ENCODE measurements at regions of chr12 and their contacts with region 1.

Region 1: DNA sequence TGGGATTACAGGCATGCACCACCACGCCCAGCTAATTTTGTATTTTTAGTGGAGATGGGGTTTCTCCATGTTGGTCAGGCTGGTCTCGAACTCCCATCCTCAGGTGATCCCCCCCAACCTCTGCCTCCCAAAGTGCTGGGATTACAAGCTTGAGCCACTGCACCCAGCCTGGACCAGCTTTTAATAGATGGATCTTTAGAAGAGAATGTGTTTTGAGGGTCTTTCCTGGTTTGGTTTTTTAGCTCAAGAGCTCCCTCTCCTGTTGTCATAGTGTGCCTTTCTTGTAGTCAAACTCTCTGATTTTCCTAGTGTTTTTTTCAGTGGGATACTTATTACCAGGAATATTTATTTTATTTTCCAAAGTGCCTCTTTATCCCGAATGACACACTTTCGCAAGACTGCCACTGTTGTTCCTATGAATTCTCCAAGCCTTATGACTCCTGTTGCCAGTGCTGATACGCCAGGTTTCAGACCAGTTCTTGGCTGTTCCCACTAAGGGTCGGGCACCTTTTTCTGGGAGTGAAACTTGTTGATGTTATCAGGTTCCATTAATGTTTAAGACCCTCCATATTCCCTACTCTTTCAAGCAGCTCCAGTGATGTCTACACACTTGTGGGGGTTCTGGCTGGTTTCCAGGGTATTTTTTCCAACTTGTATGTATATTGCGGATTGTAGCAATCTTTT is 31.5 kb upstream of the LIMA1 start:
- DNase-seq: peak; percentile 50
- H3K4me3 ChIP-seq: no peak overlapping the region
- H3K27ac ChIP-seq: no peak overlapping the region
- H3K4me1 ChIP-seq: no peaks in the 10 kb centered on the region
- CTCF ChIP-seq: peak; percentile 85

Region 2: DNA sequence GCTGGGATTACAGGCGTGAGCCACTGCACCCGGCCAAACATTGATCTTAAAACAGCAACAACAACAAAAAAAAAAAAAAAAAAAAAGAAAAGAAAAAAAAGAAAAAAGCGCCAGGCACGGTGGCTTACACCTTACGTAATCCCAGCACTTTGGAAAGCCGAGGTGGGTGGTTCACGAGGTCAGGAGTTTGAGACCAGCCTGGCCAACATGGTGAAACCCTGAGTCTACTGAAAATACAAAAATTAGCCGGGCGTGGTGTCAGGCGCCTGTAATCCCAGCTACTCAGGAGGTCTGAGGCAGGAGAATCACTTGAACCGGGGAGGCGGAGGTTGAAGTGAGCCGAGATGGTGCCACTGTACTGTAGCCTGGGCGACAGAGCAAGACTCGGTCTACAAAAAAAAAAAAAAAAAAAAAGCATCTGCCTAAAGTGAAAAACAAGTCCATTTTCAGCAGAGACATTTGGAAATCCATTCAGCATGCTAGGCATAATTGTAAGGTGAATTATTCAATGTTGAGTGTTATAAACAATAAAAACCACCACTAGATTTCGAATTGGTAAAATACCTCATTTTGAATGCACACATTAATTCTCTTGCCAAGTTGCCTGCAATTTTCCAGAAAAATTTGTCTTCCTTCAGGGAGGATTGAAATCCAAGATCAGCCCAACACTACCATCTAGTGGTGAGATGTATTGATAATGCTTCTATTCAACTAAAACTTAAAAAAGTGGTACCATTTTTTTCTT is 139.6 kb before region 1 on chr12:
- CTCF ChIA-PET with region 1: no interaction called
- POLR2A ChIA-PET with region 1: no interaction called
- intact Hi-C with region 1: loop called (anchors 1 kb)
- DNase-seq: peak; percentile 69
- H3K4me3 ChIP-seq: no peak overlapping the region
- H3K27ac ChIP-seq: no peak overlapping the region
- H3K4me1 ChIP-seq: no peaks in the 10 kb centered on the region
- CTCF ChIP-seq: peak; percentile 97

Region 3: DNA sequence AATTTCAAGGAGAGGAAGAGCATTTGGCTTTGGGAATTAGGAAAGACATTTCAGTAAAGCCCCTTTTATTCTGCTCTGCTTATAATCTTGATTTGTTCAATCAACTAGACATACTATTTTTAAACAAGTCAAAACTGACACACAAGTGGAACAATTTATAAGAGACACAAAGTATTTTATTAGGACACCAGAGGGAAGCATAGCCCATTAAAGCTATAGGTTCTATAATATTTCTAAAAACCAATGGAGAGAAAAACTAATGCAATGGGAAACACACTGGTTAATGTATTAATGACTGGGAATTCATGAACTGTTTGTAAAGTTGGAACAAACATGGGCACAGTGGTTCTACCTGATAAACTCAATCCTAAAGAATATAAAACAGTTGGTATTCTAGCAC is 132.3 kb before region 1 on chr12:
- CTCF ChIA-PET with region 1: no interaction called
- POLR2A ChIA-PET with region 1: interaction called, 7 read pairs
- intact Hi-C with region 1: loop called (anchors 1 kb)
- DNase-seq: no peak
- H3K4me3 ChIP-seq: no peak overlapping the region
- H3K27ac ChIP-seq: no peak overlapping the region
- H3K4me1 ChIP-seq: peaks cover 4% of the 10 kb centered on the region
- CTCF ChIP-seq: peak; percentile 49

Measured in OCI-LY7 (cell line).